Adrenal gland (tissue), 19 donors: ENCODE measurements at regions of chr10 and their contacts with region 1.

Region 1: DNA sequence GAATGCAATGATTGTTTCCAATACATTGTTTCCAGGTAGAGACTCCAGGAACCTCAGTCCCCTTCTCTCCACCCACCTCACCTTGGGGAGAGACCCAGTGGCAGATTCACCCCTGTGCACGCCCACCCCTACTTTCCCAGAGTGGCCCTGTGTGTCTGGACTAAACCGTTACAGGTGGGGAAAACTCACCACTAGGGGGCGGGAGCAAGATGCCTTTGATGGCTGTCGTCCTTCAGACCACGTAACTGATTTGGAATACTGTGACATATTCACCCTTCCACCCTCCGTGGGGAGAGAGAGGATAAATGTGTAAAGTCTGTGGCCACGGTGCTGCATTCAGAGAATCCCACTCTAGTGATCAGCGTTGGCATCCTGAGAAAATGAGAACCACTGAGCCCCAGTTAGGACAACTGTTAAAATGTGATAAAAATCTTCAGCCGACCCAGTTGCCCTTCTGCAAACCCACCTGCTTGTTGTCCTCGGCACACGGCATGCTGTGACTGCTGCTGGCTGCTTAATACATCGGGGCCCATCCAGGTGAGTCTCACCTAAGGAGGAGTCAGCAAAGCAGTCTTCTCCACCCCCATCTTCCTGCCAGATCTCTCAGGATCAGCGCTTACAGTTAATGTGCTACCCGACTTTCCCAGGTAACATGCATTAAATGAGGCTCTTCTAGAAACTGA is 41.5 kb upstream of the NMT2 start:
- DNase-seq: peak; percentile 68 to 93 (median 85)
- H3K4me3 ChIP-seq: no peak overlapping the region
- H3K27ac ChIP-seq: no peak overlapping the region
- H3K4me1 ChIP-seq: no peaks in the 10 kb centered on the region
- H3K27me3 ChIP-seq: no peaks in the 10 kb centered on the region
- CTCF ChIP-seq: peak; percentile 65 to 87 (median 72)
- POLR2A ChIP-seq: no peak

Region 2: GRCh38 chr10:15168781-15169554 is 41.0 kb before region 1 on chr10:
- intact Hi-C with region 1: no loop called
- DNase-seq: peak; percentile 96 to 99 (median 98)
- H3K4me3 ChIP-seq: peak overlapping the region in 1 of 4 donors; percentile 24
- H3K27ac ChIP-seq: peak overlapping the region in 1 of 5 donors; percentile 57
- H3K4me1 ChIP-seq: peaks cover 6 to 27% of the 10 kb centered on the region in 2 donors
- H3K27me3 ChIP-seq: no peaks in the 10 kb centered on the region
- CTCF ChIP-seq: no peak
- POLR2A ChIP-seq: peak in 1 of 2 donors; percentile 12

Region 3: GRCh38 chr10:15280462-15280861 is 70.5 kb after region 1 on chr10:
- intact Hi-C with region 1: no loop called
- DNase-seq: no peak
- H3K4me3 ChIP-seq: no peak overlapping the region
- H3K27ac ChIP-seq: no peak overlapping the region
- H3K4me1 ChIP-seq: no peaks in the 10 kb centered on the region
- H3K27me3 ChIP-seq: no peaks in the 10 kb centered on the region
- CTCF ChIP-seq: no peak
- POLR2A ChIP-seq: no peak

Region 4: DNA sequence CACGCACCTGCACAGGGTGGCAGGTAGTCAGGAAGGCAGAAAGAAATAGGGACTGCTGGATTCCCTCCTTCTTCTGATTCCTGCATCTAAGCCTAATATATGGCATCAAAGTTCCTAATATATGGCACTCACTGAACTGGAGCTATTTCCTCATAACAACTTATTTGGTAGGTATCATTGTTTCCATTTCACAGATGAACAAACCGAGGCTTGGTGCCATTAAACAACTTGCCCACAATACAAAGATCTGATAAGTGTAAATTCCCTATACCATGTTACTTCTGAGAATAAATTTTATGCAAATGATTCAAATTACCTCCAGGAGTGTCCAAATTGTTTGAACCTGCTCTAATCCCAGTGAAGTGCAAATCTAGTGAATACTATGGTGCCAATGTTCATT is 163.2 kb after region 1 on chr10:
- intact Hi-C with region 1: loop called in 1 of 2 experiments (anchors 2 kb)
- DNase-seq: no peak
- H3K4me3 ChIP-seq: no peak overlapping the region
- H3K27ac ChIP-seq: no peak overlapping the region
- H3K4me1 ChIP-seq: peaks cover 0 to 4% of the 10 kb centered on the region in 2 donors
- H3K27me3 ChIP-seq: no peaks in the 10 kb centered on the region
- CTCF ChIP-seq: no peak
- POLR2A ChIP-seq: no peak